ENCODE measurements at regions of chr2 and their contacts with region 1.

Region 1: DNA sequence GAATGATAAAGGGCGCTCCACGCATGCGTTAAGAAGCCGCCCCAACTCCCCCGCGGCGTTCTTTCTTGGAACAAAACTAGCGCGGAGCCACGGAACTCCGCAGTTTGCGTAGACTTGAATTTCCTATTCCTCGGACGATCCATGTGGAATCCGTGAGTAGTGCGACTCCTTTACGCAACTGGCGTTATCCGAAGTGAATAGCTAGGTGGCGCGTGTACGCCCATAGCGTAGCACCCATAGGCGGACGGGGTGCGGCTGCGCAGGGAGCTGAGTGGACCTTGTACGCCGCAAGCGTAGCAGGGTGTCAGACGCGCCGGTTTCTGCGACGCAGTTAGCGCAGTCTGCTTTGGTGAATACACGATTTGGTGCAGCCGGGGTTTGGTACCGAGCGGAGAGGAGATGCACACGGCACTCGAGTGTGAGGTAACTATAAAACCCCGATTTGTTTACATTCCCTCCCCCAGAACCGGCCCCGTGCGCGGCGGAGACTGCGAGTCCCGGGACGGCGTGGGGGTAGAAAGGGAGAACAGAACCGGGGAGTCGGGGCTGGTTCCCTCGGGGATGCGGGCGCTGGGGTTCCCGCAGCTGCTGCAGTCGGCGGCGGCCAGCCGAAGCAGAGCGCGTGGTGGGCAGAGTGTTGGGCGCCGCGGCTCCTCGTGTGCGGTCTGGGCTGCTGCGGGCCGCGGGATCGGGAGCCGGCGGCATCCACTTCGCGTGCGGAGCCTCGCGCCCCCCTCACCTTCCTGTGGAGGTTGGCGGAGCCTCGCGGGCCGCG is at the start of gene SLC39A10:
- DNase-seq: peak; percentile 87
- CTCF ChIP-seq: peak; percentile 21

Region 2: DNA sequence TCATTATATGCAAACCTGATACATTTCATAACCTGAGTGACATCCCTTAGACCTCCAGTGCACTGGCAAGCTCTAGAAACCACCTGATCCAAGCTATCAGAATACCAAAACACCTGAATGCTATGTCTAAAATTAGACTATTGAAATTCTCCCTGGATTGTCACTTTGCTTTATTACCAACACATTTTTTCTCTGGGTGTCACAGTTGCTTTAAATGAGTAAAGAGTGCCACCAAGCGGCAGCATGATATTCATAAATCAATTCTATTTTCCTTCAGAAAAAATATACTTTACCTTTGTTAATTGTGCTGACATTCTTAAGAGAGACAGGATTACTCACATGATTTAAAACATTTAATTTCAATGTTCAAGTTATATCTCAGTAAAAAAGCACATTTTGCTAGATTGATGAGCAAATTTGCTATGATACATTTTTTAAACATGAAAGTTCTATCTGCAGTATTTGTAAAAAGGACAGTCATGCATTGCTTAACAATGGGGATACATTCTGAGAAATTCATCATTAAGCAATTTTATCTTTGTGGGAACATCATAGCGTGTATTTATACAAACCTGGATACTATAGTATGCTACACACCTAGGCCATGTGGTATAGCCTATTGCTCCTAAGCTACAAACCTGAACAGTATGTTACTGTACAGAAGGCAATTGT is 338.5 kb before region 1 on chr2:
- in situ Hi-C with region 1: loop called (anchors 25 kb)
- DNase-seq: peak; percentile 31
- CTCF ChIP-seq: peak; percentile 64

Region 3: GRCh38 chr2:195498176-195498575 is 158.9 kb before region 1 on chr2:
- in situ Hi-C with region 1: loop called (anchors 25 kb)
- DNase-seq: no peak
- CTCF ChIP-seq: peak; percentile 51

Region 4: DNA sequence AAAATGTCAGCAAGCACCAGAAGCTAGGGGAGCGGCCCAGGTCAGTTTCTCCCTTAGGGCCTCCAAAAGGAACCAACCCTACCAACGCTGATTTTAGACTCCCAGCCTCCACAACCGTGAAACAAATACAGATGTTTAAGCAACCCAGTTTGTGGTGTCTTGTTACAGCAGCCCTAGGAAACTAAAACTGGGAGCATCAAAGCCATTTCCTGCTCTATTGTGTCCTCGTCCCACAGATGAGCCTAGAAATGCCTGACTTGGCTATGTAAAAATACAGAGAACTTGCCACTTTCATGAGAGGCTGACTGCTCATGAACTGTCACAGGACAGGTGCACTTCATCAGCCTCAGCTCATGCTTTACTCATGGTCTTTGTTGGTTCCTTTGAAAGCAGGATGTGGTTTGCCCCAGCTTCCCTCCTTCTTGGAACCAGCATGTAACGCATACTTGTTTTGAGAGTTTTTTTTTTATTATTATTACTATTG is 97.6 kb before region 1 on chr2:
- in situ Hi-C with region 1: no loop called
- DNase-seq: peak; percentile 74
- CTCF ChIP-seq: no peak

Region 5: DNA sequence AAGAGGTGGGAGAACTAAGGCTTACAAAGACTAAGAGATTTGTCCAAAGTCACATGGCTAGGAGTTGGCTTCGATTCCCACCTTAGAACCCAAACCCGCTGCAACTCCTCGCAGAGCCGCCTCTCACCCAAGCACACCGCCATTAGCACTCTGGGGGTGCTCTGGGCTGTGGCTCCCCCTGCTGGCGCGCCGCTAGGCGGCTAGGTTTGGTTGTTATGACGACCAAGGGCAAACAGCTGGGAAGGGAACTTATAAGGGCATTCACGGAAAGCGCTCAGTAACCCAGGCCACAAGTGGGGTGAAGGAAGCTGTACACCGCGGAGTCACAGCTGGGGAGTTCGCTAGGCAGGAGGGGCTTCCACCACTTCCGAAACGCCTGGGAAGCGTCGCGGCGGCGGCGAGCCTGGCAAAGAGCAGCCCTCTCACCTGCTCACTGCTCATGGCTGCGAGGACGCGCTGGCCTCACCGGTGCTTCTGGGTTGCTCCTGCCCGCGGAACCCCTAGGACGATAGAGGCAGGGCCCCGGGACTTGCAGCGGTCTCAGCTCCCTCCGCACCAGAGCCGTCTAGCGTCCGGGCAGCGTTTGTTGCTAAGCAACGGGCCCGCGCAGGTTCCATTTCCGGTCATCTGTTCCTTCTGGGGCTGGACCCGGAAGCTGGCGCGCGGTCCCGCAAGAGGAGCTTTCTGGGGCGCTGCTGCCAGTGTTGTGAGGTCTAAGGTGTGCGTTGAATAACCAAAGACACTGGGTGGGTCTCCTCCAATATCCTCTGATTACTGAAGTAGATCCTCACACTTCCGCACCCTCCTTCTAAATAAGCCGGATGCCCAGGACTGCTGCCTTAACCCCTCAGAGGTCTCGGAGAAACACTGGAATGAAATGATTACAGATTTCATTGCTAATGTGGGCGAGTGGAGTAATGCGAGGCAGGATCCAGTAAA is 411.5 kb after region 1 on chr2 and contains the start of gene DNAH7:
- in situ Hi-C with region 1: loop called (anchors 25 kb)
- DNase-seq: peak; percentile 85
- CTCF ChIP-seq: peak; percentile 94

Region 6: GRCh38 chr2:196131384-196131937 is 474.4 kb after region 1 on chr2:
- in situ Hi-C with region 1: no loop called
- DNase-seq: no peak
- CTCF ChIP-seq: peak; percentile 56

Measured in GM13977 (cell line).